Transverse colon (tissue), 4 donors: ENCODE measurements at regions of chr4 and their contacts with region 1.

Region 1: GRCh38 chr4:147866532-147867271 is 134.8 kb downstream of the ARHGAP10 start:
- DNase-seq: peak; percentile 95
- H3K4me3 ChIP-seq: no peak overlapping the region
- H3K27ac ChIP-seq: peak overlapping the region in 2 of 4 donors; percentile 2 to 35
- H3K4me1 ChIP-seq: peaks cover 0 to 24% (median 0%) of the 10 kb centered on the region in 4 donors
- H3K27me3 ChIP-seq: no peaks in the 10 kb centered on the region
- CTCF ChIP-seq: peak; percentile 98 to 100 (median 99)
- EP300 ChIP-seq: no peak
- POLR2A ChIP-seq: no peak

Region 2: DNA sequence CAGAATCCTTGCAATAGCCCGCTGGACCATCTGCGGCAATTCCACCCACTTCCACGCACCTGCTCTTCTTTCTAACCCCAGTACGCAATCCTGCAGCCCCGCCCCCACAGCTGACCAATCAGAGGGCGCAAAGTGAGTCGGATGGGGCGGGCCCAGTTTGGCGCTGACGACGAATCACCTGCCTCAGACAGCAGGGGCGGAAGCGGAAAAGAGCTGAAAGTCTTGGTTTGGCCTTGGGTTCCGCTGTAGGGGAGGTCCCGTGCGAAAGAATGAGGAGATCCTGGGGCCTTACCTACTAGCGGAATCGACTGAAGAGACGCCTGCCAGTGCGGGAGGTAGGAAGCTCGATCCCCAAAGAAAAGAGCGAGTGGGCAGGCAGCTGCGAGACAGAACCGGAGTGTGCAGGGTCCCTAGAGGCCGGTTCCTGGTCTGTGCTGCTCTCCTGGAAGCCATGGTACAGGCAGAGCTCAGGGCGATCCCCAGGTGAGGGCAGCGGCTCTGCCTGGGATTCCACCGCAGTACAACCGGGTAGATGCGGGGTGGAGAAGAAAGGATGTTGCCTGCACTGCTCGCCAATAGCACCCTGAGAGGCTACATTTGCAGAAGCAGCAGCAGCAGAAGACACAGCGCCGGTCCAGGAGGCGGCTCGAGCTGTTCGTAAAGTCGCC is 249.4 kb before region 1 on chr4 and contains the start of gene TMEM184C:
- in situ Hi-C with region 1: no loop called
- intact Hi-C with region 1: loop called (anchors 10 kb)
- DNase-seq: peak; percentile 99
- H3K4me3 ChIP-seq: peak within 1 kb of the TSS; percentile 43 to 84 (median 76)
- H3K27ac ChIP-seq: peak within 1 kb of the TSS; percentile 83 to 90 (median 86)
- H3K4me1 ChIP-seq: peaks cover 9 to 44% (median 29%) of the 10 kb centered on the region in 4 donors
- H3K27me3 ChIP-seq: no peaks in the 10 kb centered on the region
- CTCF ChIP-seq: peak in 2 of 5 experiments; percentile 8 to 25
- EP300 ChIP-seq: no peak
- POLR2A ChIP-seq: peak; percentile 81
- total RNA-seq, gene TMEM184C: 14.9 to 40.3 (median 25.5) TPM

Region 3: GRCh38 chr4:147707865-147708672 is 158.6 kb before region 1 on chr4:
- in situ Hi-C with region 1: loop called (anchors 5 kb)
- intact Hi-C with region 1: loop called (anchors 2 kb)
- DNase-seq: peak; percentile 33
- H3K4me3 ChIP-seq: no peak overlapping the region
- H3K27ac ChIP-seq: no peak overlapping the region
- H3K4me1 ChIP-seq: no peaks in the 10 kb centered on the region
- H3K27me3 ChIP-seq: no peaks in the 10 kb centered on the region
- CTCF ChIP-seq: peak; percentile 84 to 93 (median 90)
- EP300 ChIP-seq: no peak
- POLR2A ChIP-seq: no peak

Region 4: GRCh38 chr4:147714575-147715401 is 151.9 kb before region 1 on chr4:
- in situ Hi-C with region 1: loop called (anchors 5 kb)
- intact Hi-C with region 1: loop called (anchors 2 kb)
- DNase-seq: peak; percentile 23
- H3K4me3 ChIP-seq: no peak overlapping the region
- H3K27ac ChIP-seq: no peak overlapping the region
- H3K4me1 ChIP-seq: no peaks in the 10 kb centered on the region
- H3K27me3 ChIP-seq: peaks cover 7% of the 10 kb centered on the region
- CTCF ChIP-seq: no peak
- EP300 ChIP-seq: no peak
- POLR2A ChIP-seq: no peak

Region 5: DNA sequence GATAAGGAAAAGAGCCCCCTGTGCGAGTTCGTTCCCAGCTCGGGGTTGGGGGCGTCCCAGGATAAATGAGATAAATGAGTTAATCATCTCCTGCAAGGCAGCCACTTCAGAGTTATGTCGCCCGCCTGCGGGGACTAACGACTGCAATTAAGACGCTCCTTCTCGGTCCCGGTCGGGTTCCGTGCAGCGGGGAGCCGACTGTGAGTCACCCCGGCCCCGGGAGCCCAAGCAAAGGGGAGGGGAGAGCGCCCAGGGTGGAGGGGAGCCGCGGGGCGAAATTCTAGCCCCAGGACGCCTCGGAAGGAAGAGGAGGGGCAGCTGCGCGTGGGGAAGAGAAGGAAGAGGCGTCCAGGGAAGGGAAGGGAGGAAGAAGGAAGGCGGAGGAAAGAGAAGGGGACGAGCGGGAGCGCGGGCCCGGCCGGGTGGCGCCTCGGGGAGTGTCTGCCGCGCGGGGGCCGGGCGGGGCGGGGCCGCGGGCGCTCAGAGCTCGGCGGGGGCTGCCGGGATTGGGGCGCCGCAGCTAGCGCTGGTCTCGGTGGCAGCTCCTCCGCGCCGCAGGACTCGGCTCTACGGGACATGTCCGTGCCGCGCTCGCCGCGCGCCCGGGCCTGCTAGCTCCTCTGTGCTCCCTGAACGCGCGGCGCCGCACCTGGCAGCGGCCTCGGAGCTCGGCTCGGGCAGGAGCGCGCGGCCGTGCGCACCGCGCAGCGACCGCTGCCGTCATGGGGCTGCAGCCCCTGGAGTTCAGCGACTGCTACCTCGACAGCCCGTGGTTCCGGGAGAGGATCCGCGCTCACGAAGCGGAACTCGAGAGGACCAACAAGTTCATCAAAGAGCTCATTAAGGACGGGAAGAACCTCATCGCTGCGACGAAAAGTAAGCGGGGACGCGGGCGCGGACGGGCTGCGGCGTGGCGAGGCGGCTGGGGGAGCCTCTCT is 134.9 kb before region 1 on chr4 and contains the start of gene ARHGAP10:
- in situ Hi-C with region 1: no loop called
- intact Hi-C with region 1: loop called (anchors 10 kb)
- DNase-seq: peak; percentile 66
- H3K4me3 ChIP-seq: peak within 1 kb of the TSS; percentile 56 to 81 (median 70)
- H3K27ac ChIP-seq: peak within 1 kb of the TSS; percentile 85 to 94 (median 92)
- H3K4me1 ChIP-seq: peaks cover 4 to 42% (median 6%) of the 10 kb centered on the region in 4 donors
- H3K27me3 ChIP-seq: peaks cover 40% of the 10 kb centered on the region
- CTCF ChIP-seq: no peak
- EP300 ChIP-seq: no peak
- POLR2A ChIP-seq: no peak
- total RNA-seq, gene ARHGAP10: 14.7 to 27.3 (median 22.9) TPM

Region 6: GRCh38 chr4:148376151-148376550 is 509.4 kb after region 1 on chr4:
- in situ Hi-C with region 1: no loop called
- intact Hi-C with region 1: no loop called
- DNase-seq: peak; percentile 72
- H3K4me3 ChIP-seq: peak overlapping the region in 1 of 4 donors; percentile 31
- H3K27ac ChIP-seq: peak overlapping the region; percentile 23 to 68 (median 62)
- H3K4me1 ChIP-seq: peaks cover 6 to 31% (median 11%) of the 10 kb centered on the region in 4 donors
- H3K27me3 ChIP-seq: no peaks in the 10 kb centered on the region
- CTCF ChIP-seq: no peak
- EP300 ChIP-seq: no peak
- POLR2A ChIP-seq: no peak